Activated naive CD8-positive, alpha-beta T cell treated with anti-CD3 and anti-CD28 coated beads, Interleukin-2, amount 10 ng/mL, durations not matched to agents 7 days and 5 days (primary cell): ENCODE measurements at regions of chr4 and their contacts with region 1.

Region 1: DNA sequence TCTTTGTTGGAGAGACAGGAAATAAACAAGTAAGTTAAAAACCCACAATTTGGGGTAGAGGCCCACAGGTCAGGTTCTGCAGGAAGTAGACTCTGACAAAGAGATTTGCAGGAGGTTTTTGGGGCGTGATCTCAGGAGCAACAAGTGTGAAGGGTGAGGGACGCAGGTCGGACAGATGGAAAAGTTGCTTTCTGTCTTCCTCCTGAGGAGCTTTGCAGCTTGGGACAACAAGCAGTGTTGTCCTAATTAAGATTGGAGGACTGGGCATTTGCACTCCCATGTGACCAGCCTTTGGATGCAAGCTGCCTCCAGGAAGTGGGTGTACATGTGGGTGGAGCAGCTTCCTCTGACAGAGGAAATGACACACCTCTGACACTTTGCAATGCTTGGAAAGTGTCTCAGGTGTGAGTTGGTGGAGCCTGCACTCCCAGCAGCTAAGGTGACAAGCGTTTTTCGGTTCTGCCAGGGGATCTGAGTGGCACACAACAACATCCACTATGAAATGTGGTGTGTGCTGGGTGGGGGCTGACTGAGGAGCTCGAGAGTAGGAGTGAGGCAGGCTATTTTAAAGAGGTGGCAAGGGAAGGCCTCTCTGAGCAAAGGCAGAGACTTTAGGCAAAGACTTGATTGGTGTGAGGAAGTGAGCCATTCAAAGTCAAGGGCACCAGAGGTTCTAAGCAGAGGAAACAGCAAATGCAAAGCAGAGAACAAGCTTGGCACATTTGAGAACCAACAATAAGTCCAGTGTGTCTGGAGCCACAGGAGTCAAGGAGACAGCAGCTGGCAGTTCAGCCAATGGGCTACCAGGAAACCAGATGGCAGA is 339.8 kb upstream of the GATB start:
- DNase-seq: peak; percentile 73
- ATAC-seq: peak; percentile 90
- H3K4me3 Mint-ChIP-seq: peak overlapping the region; percentile 89
- H3K27ac Mint-ChIP-seq: peak overlapping the region; percentile 99
- H3K4me1 Mint-ChIP-seq: peaks cover 49% of the 10 kb centered on the region
- H3K27me3 Mint-ChIP-seq: no peaks in the 10 kb centered on the region

Region 2: DNA sequence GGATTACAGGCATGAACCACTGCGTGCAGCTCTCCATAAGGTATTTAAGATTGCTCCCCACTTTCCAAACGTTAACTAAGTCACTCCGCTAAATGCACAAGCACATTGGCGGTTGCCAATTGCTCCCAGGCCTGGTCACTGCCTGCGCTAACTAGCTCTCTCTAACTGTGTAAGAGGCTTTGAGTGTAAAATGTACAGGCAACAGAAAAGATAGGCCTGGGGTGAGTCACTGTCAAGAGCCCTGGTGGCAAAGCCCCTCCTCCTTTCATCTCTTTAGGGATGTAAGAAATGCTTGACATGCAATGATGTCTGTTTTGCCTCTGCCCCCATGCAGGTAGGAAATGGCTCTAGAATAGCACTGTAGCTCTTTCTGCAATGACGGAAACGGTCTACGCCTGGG is 10.0 kb before region 1 on chr4:
- POLR2A ChIA-PET with region 1: interaction called, 16 read pairs
- DNase-seq: no peak
- ATAC-seq: peak; percentile 91
- H3K4me3 Mint-ChIP-seq: peak overlapping the region; percentile 59
- H3K27ac Mint-ChIP-seq: peak overlapping the region; percentile 96
- H3K4me1 Mint-ChIP-seq: peaks cover 36% of the 10 kb centered on the region
- H3K27me3 Mint-ChIP-seq: no peaks in the 10 kb centered on the region